ENCODE measurements at regions of chr11 and their contacts with region 1.

Region 1: GRCh38 chr11:16613512-16614381 is 124.7 kb upstream of the C11orf58 start:
- DNase-seq: peak; percentile 83
- H3K4me3 ChIP-seq: peak overlapping the region; percentile 32
- H3K27ac ChIP-seq: no peak overlapping the region
- H3K4me1 ChIP-seq: peaks cover 8% of the 10 kb centered on the region
- H3K27me3 ChIP-seq: peaks cover 54% of the 10 kb centered on the region
- CTCF ChIP-seq: peak; percentile 91

Region 2: GRCh38 chr11:15327786-15328231 is 1285.9 kb before region 1 on chr11:
- intact Hi-C with region 1: loop called (anchors 5 kb)
- DNase-seq: peak; percentile 40
- H3K4me3 ChIP-seq: no peak overlapping the region
- H3K27ac ChIP-seq: no peak overlapping the region
- H3K4me1 ChIP-seq: no peaks in the 10 kb centered on the region
- H3K27me3 ChIP-seq: no peaks in the 10 kb centered on the region
- CTCF ChIP-seq: peak; percentile 34

Region 3: DNA sequence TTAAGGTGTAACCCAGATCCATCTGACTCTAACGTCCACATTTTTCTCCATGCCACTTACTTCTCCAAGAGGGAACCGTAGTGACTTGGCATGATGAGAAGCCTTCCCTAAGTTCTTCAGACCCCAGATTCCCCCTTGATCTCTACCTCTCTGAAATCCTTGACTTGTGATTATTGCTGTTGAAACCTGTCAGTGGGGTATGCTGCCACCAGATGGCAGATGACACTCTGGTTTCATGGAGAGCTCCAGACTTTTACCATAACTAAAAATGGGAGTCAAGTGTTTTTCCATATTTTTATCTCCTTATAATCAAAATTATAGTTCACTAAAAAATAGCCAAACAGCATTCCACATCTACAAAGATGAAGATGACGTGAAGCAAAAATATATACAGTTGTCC is 761.6 kb before region 1 on chr11:
- intact Hi-C with region 1: loop called (anchors 5 kb)
- DNase-seq: no peak
- H3K4me3 ChIP-seq: no peak overlapping the region
- H3K27ac ChIP-seq: no peak overlapping the region
- H3K4me1 ChIP-seq: no peaks in the 10 kb centered on the region
- H3K27me3 ChIP-seq: no peaks in the 10 kb centered on the region
- CTCF ChIP-seq: peak; percentile 42

Region 4: GRCh38 chr11:16204261-16204660 is 409.5 kb before region 1 on chr11:
- intact Hi-C with region 1: no loop called
- DNase-seq: no peak
- H3K4me3 ChIP-seq: no peak overlapping the region
- H3K27ac ChIP-seq: no peak overlapping the region
- H3K4me1 ChIP-seq: no peaks in the 10 kb centered on the region
- H3K27me3 ChIP-seq: no peaks in the 10 kb centered on the region
- CTCF ChIP-seq: no peak

Measured in colonic mucosa (tissue), 4 donors.